Activated CD8-positive, alpha-beta T cell treated with anti-CD3 and anti-CD28 coated beads for 36 hours (primary cell): ENCODE measurements at regions of chrX and their contacts with region 1.

Region 1: DNA sequence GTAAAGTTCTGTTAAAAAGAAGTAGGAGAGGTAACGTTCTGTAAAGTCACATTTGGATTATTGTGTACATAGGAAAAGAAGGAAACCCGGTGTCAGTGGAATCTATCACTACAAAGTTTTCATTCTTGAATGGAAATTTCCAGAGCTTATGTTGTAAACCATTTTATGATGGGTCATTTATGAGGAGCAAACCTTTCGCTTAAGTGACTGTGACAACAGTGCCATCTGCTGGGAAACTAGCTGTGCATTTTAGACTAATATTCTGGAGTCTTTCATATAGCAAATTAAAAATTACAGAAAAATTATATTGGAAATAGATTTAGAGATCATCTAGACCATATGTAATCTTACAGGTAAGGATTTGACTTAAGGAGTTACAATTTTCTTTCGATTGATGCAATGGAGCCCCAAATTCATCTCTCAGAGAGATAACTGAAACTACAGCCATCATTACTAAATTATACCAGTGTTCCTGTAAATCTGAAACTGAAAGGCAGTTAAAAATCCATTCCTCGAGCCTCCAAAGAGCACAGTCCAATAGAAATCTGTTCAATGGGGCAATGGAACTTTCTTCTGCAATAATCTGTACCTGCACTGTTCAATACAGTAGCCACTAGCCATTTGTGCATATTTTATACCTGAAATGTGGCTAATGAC is 26.9 kb downstream of the ASB9 start:
- DNase-seq: peak; percentile 64
- ATAC-seq: no peak
- H3K4me3 Mint-ChIP-seq: no peak overlapping the region
- H3K27ac Mint-ChIP-seq: no peak overlapping the region
- H3K4me1 Mint-ChIP-seq: peaks cover 9% of the 10 kb centered on the region
- H3K27me3 Mint-ChIP-seq: no peaks in the 10 kb centered on the region
- CTCF ChIP-seq: peak; percentile 52

Region 2: DNA sequence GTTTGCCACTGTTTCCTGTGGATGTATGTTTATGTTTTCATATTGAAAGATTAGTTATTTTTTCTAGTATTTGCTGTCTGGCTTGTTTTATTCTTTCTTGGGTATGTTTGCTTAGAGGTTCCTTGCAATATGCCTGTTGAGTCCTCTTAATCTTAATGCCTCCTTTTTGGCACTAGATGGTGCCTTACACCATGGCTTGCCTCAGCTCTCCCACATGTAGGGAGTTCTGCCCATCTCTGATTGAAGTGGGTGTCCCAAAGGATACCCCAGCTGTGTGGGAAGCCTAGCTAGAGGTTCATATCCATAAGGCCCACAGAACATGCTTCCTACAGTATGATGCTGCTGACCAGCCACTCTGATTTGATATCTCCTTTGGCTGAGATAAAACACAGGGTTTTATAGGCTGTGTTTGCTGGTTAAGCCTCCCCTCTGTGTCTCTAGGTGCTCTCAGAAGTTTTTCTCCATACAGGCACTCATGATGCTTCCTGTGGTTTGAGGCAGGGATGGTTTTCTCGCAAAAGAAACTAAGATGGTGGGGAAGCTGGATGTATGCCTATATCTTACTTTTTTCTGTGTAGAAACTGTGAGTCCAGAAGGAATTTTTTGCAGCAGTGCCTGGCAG is 135.5 kb before region 1 on chrX:
- CTCF ChIA-PET with region 1: interaction called, 12 read pairs
- POLR2A ChIA-PET with region 1: no interaction called
- intact Hi-C with region 1: loop called (anchors 5 kb)
- DNase-seq: peak; percentile 3
- ATAC-seq: peak; percentile 49
- H3K4me3 Mint-ChIP-seq: no peak overlapping the region
- H3K27ac Mint-ChIP-seq: no peak overlapping the region
- H3K4me1 Mint-ChIP-seq: peaks cover 12% of the 10 kb centered on the region
- H3K27me3 Mint-ChIP-seq: peaks cover 6% of the 10 kb centered on the region
- CTCF ChIP-seq: peak; percentile 30

Region 3: GRCh38 chrX:15151267-15152186 is 91.5 kb before region 1 on chrX:
- CTCF ChIA-PET with region 1: no interaction called
- POLR2A ChIA-PET with region 1: no interaction called
- intact Hi-C with region 1: loop called (anchors 10 kb)
- DNase-seq: peak; percentile 48
- ATAC-seq: peak; percentile 95
- H3K4me3 Mint-ChIP-seq: peak overlapping the region; percentile 46
- H3K27ac Mint-ChIP-seq: peak overlapping the region; percentile 88
- H3K4me1 Mint-ChIP-seq: peaks cover 24% of the 10 kb centered on the region
- H3K27me3 Mint-ChIP-seq: no peaks in the 10 kb centered on the region
- CTCF ChIP-seq: no peak

Region 4: GRCh38 chrX:15418041-15418706 is 175.1 kb after region 1 on chrX:
- CTCF ChIA-PET with region 1: no interaction called
- POLR2A ChIA-PET with region 1: no interaction called
- intact Hi-C with region 1: no loop called
- DNase-seq: no peak
- ATAC-seq: no peak
- H3K4me3 Mint-ChIP-seq: no peak overlapping the region
- H3K27ac Mint-ChIP-seq: no peak overlapping the region
- H3K4me1 Mint-ChIP-seq: no peaks in the 10 kb centered on the region
- H3K27me3 Mint-ChIP-seq: no peaks in the 10 kb centered on the region
- CTCF ChIP-seq: no peak